Endothelial cell of umbilical vein (primary cell): ENCODE measurements at regions of chr2 and their contacts with region 1.

Region 1: DNA sequence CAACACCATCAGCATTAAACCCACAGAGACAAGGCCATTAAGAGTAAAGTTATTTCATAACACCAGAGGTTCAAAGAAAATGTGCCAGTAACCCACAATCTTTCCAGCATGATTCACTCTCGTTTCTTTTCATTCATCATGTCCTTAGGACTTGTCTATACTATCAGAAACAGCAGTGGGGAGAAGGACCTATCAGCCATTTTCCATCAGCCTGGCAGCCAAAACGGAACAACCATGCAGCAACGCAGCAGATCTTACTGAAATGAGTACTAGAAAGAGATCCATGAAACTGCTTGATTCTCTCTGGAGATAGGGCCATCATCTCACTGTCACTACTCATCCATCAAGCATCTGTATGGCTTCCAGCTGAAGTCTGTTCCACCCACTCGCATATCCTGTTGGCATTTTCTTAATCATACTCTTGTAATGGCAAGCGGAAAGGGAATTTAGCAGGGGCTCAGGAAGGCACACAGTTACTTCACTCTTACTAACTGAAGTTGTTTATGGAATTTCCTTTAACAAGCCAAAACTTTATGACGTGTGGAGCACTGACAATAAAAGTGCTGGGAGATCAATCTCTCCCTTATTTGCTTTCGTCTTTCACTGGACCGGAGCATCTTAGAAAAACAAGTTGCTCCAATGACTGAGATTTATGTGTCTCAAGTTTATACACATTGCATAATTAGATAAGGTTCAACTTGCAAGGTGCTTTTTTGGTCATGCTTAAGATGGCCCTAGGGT is 69.7 kb downstream of the EPHA4 start:
- DNase-seq: peak; percentile 86
- H3K4me3 ChIP-seq: peak overlapping the region in 1 of 3 experiments; percentile 43
- H3K27ac ChIP-seq: peak overlapping the region; percentile 86
- H3K4me1 ChIP-seq: peaks cover 39% of the 10 kb centered on the region
- H3K27me3 ChIP-seq: no peaks in the 10 kb centered on the region
- CTCF ChIP-seq: no peak
- POLR2A ChIP-seq: peak; percentile 54

Region 2: DNA sequence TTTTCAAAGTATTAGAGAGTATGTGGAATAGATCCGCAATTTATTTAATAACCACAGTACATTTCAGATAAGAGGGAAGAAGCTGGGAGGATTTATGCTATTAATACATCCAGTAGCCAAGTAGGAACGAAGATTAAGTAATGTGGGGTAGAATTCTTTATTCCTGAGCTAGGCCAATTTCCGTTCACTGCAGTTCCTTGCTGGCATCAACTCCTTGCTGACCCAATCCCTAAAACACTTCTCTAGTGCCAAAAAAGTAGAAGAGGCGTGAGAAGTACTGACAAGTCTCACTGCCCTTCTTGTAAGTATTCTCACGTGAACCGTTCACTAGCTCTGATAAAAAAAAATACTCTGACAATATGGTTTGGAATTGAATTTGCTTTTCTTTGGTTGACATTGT is 141.7 kb before region 1 on chr2:
- CTCF ChIA-PET with region 1: no interaction called
- POLR2A ChIA-PET with region 1: no interaction called
- dilution Hi-C with region 1: no loop called
- intact Hi-C with region 1: no loop called
- DNase-seq: no peak
- H3K4me3 ChIP-seq: no peak overlapping the region
- H3K27ac ChIP-seq: no peak overlapping the region
- H3K4me1 ChIP-seq: no peaks in the 10 kb centered on the region
- H3K27me3 ChIP-seq: no peaks in the 10 kb centered on the region
- CTCF ChIP-seq: no peak
- POLR2A ChIP-seq: no peak

Region 3: GRCh38 chr2:221434142-221434541 is 68.3 kb before region 1 on chr2:
- CTCF ChIA-PET with region 1: interaction called, 4 read pairs
- POLR2A ChIA-PET with region 1: no interaction called
- dilution Hi-C with region 1: no loop called
- intact Hi-C with region 1: loop called (anchors 2 kb)
- DNase-seq: peak; percentile 64
- H3K4me3 ChIP-seq: no peak overlapping the region
- H3K27ac ChIP-seq: peak overlapping the region; percentile 25
- H3K4me1 ChIP-seq: peaks cover 22% of the 10 kb centered on the region
- H3K27me3 ChIP-seq: no peaks in the 10 kb centered on the region
- CTCF ChIP-seq: no peak
- POLR2A ChIP-seq: no peak

Region 4: GRCh38 chr2:221444106-221444505 is 58.3 kb before region 1 on chr2:
- CTCF ChIA-PET with region 1: interaction called, 5 read pairs
- POLR2A ChIA-PET with region 1: no interaction called
- dilution Hi-C with region 1: no loop called
- intact Hi-C with region 1: loop called (anchors 1 kb)
- DNase-seq: peak; percentile 92
- H3K4me3 ChIP-seq: no peak overlapping the region
- H3K27ac ChIP-seq: peak overlapping the region; percentile 95
- H3K4me1 ChIP-seq: peaks cover 31% of the 10 kb centered on the region
- H3K27me3 ChIP-seq: no peaks in the 10 kb centered on the region
- CTCF ChIP-seq: no peak
- POLR2A ChIP-seq: no peak

Region 5: GRCh38 chr2:221517696-221518151 is 15.3 kb after region 1 on chr2:
- CTCF ChIA-PET with region 1: interaction called, 4 read pairs
- POLR2A ChIA-PET with region 1: no interaction called
- dilution Hi-C with region 1: no loop called
- intact Hi-C with region 1: loop called (anchors 1 kb)
- DNase-seq: peak; percentile 72
- H3K4me3 ChIP-seq: no peak overlapping the region
- H3K27ac ChIP-seq: peak overlapping the region; percentile 70
- H3K4me1 ChIP-seq: peaks cover 33% of the 10 kb centered on the region
- H3K27me3 ChIP-seq: no peaks in the 10 kb centered on the region
- CTCF ChIP-seq: no peak
- POLR2A ChIP-seq: no peak

Region 6: GRCh38 chr2:221529943-221530652 is 27.7 kb after region 1 on chr2:
- CTCF ChIA-PET with region 1: interaction called, 4 read pairs
- POLR2A ChIA-PET with region 1: no interaction called
- dilution Hi-C with region 1: no loop called
- intact Hi-C with region 1: loop called (anchors 1 kb)
- DNase-seq: peak; percentile 89
- H3K4me3 ChIP-seq: peak overlapping the region in 1 of 3 experiments; percentile 37
- H3K27ac ChIP-seq: peak overlapping the region; percentile 88
- H3K4me1 ChIP-seq: peaks cover 41% of the 10 kb centered on the region
- H3K27me3 ChIP-seq: no peaks in the 10 kb centered on the region
- CTCF ChIP-seq: no peak
- POLR2A ChIP-seq: no peak

Region 7: DNA sequence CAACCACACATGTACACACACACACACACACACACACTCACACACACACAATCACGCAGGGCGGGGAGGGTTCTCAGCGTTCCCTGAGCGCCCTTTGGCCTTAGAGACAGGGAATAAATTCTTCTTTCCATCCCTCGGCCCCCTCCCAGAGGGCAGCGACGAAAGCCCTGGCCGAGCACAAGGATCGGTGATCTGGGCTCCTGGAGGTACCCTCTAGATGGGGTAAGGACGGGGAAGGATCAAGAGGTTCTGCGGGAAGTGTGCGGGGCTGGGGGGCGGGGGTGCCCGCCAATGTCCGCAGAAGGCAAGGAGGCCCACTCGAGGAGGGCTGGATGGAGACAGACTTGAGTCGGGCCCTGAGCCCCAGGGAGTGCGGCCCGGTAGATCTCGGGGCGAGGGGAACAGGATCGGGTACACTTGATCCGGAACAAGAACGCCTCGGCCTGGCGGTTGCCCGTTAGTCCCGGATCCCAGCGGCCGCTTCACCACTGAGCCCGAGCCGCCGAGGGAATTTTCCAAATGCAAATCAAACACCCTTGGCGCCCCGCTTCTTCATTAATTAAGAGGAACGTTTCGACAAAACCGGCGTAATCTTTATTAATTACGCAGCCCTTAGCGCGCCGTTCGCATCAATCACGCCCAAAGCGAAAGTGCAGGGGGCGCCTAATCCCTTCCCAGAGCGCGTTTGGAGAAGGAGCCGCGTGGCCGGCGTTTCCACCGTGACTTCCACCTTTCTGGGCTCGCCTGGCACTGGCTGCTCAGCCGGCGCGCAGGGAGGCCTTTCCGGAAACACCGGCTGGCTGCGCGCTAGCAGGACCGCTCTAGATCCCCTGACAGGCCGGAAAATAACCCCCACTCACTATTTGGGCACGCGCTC is 803.3 kb after region 1 on chr2:
- CTCF ChIA-PET with region 1: no interaction called
- POLR2A ChIA-PET with region 1: no interaction called
- dilution Hi-C with region 1: no loop called
- intact Hi-C with region 1: loop called (anchors 10 kb)
- DNase-seq: no peak
- H3K4me3 ChIP-seq: peak overlapping the region in 2 of 3 experiments; percentile 33 to 38
- H3K27ac ChIP-seq: no peak overlapping the region
- H3K4me1 ChIP-seq: peaks cover 9% of the 10 kb centered on the region
- H3K27me3 ChIP-seq: peaks cover 97 to 100% of the 10 kb centered on the region in 2 experiments
- CTCF ChIP-seq: no peak
- POLR2A ChIP-seq: no peak

Region 8: DNA sequence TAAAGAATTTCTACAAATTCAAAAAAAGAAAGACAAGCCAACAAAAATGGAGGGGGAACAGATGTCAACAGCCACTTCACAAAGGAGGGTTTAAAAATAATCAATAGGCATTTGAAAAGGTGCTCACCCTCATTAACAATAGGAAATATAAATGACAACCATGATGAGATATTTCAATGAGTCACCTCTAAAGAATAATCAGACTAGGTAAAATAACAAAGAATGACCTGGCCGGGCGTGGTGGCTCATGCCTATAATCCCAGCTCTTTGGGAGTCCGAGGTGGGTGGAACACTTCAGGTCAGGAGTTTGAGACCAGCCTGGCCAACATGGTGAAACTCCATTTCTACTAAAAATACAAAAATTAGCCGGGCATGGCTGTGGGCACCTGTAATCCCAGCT is 1683.2 kb after region 1 on chr2:
- CTCF ChIA-PET with region 1: no interaction called
- POLR2A ChIA-PET with region 1: no interaction called
- dilution Hi-C with region 1: no loop called
- intact Hi-C with region 1: loop called (anchors 5 kb)
- DNase-seq: no peak
- H3K4me3 ChIP-seq: no peak overlapping the region
- H3K27ac ChIP-seq: no peak overlapping the region
- H3K4me1 ChIP-seq: no peaks in the 10 kb centered on the region
- H3K27me3 ChIP-seq: no peaks in the 10 kb centered on the region
- CTCF ChIP-seq: no peak
- POLR2A ChIP-seq: no peak